Naive thymus-derived CD4-positive, alpha-beta T cell (primary cell): ENCODE measurements at regions of chr5 and their contacts with region 1.

Region 1: GRCh38 chr5:139422307-139422893 is 16.9 kb downstream of the DNAJC18 start:
- DNase-seq: peak in 7 of 9 donors; percentile 65 to 86 (median 75)
- ATAC-seq: peak; percentile 99
- H3K4me3 ChIP-seq: no peak overlapping the region
- H3K4me3 Mint-ChIP-seq: peak overlapping the region in 2 of 10 donors; percentile 19 to 47
- H3K27ac ChIP-seq: no peak overlapping the region
- H3K27ac Mint-ChIP-seq: peak overlapping the region in 6 of 9 donors; percentile 16 to 87 (median 74)
- H3K4me1 ChIP-seq: peaks cover 3 to 4% of the 10 kb centered on the region in 2 donors
- H3K4me1 Mint-ChIP-seq: peaks cover 4 to 40% (median 6%) of the 10 kb centered on the region in 7 donors
- H3K27me3 ChIP-seq: no peaks in the 10 kb centered on the region
- H3K27me3 Mint-ChIP-seq: no peaks in the 10 kb centered on the region

Region 2: GRCh38 chr5:139287890-139288635 is 134.3 kb before region 1 on chr5:
- CTCF ChIA-PET with region 1: interaction called, 6 read pairs
- POLR2A ChIA-PET with region 1: no interaction called
- intact Hi-C with region 1: loop called in 1 of 2 experiments (anchors 1 kb)
- DNase-seq: peak in 4 of 9 donors; percentile 21 to 38 (median 34)
- ATAC-seq: peak; percentile 57
- H3K4me3 ChIP-seq: no peak overlapping the region
- H3K4me3 Mint-ChIP-seq: no peak overlapping the region
- H3K27ac ChIP-seq: no peak overlapping the region
- H3K27ac Mint-ChIP-seq: peak overlapping the region in 2 of 9 donors; percentile 0 to 7
- H3K4me1 ChIP-seq: peaks cover 0 to 3% of the 10 kb centered on the region in 2 donors
- H3K4me1 Mint-ChIP-seq: peaks cover 0 to 20% (median 5%) of the 10 kb centered on the region in 7 donors
- H3K27me3 ChIP-seq: no peaks in the 10 kb centered on the region
- H3K27me3 Mint-ChIP-seq: no peaks in the 10 kb centered on the region

Region 3: DNA sequence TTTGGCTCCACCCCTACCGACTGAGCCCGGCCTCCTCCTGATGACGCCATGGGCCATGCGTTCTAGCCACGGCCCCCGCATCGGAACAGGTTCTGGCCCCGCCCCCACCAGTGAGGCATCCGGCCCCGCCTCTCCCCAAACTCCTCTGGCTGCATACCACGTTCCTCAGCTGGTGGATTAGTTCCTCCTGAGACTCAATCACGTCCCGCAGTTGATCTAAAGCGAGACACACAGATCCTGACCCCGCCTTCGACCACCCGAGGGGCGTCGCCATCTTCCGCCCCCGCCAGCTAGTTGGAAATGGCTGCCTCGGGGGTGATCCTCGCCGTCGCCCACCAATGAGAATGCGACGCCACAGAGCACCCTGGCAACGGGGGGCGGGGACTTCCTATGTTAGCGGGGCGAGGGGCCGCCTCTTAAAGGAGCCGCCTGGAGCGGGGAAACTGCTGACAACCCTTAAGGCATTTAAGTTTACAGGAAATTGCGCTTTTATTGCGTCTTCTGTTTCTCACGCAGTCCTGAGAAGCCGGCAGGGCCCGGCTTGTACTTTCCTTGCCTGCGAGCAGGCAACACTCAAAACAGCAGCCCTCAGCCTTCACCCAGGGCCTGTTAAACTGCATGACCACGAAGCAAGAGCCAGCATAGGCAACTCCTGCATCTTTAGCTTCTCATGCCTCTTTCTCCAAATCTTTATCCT is 18.5 kb before region 1 on chr5 and contains the start of gene SPATA24:
- CTCF ChIA-PET with region 1: interaction called, 7 read pairs
- POLR2A ChIA-PET with region 1: interaction called, 9 read pairs
- intact Hi-C with region 1: loop called in 1 of 2 experiments (anchors 1 kb)
- DNase-seq: peak; percentile 90 to 99 (median 98)
- ATAC-seq: peak; percentile 94
- H3K4me3 ChIP-seq: peak within 1 kb of the TSS; percentile 56
- H3K4me3 Mint-ChIP-seq: peak within 1 kb of the TSS; percentile 88 to 98 (median 94)
- H3K27ac ChIP-seq: peak within 1 kb of the TSS; percentile 88
- H3K27ac Mint-ChIP-seq: peak within 1 kb of the TSS; percentile 96 to 100 (median 99)
- H3K4me1 ChIP-seq: peaks cover 16 to 18% of the 10 kb centered on the region in 2 donors
- H3K4me1 Mint-ChIP-seq: peaks cover 26 to 42% (median 36%) of the 10 kb centered on the region in 7 donors
- H3K27me3 ChIP-seq: no peaks in the 10 kb centered on the region
- H3K27me3 Mint-ChIP-seq: no peaks in the 10 kb centered on the region
- total RNA-seq, gene SPATA24: 4.4 to 7.6 (median 5.8) TPM

Region 4: DNA sequence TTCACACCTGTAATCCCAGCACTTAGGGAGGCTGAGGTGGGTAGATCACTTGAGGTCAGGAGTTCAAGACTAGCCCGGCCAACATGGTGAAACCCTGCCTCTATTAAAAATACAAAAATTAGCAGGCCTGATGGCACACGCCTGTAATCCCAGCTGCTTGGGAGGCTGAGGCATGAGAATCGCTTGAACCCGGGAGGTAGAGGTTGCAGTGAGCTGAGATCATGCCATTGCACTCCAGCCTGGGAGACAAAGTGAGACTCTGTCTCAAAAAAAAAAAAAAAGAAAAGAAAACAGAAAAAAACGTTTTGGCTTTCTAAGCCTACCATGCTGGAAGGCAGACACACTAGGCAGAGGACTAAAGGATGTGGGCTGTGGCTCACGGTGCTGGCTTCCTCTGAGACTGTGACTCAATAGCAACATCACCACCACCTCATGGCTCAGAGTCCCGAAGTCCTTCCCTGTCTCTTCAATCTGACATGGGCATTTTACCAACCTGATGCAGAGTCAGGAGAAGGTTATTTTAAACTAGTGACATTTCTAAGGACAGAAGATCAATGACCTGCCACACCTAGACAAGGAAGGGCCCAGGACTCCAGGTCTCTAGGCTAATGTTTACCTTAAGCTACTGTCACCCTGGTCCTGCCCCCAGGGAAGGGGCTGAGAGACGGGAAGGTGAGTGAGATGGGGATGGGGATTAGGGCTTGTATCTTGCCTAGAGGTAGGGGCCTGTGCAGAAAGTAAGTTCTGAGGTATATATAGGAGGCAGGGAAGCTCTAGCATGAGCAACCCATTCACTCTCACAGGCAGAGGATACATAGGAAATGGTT is 36.4 kb after region 1 on chr5:
- CTCF ChIA-PET with region 1: interaction called, 16 read pairs
- POLR2A ChIA-PET with region 1: interaction called, 7 read pairs
- intact Hi-C with region 1: loop called in 1 of 2 experiments (anchors 1 kb)
- DNase-seq: peak in 8 of 9 donors; percentile 71 to 89 (median 85)
- ATAC-seq: peak; percentile 98
- H3K4me3 ChIP-seq: peak overlapping the region; percentile 10
- H3K4me3 Mint-ChIP-seq: peak overlapping the region; percentile 38 to 86 (median 64)
- H3K27ac ChIP-seq: peak overlapping the region; percentile 73
- H3K27ac Mint-ChIP-seq: peak overlapping the region; percentile 89 to 98 (median 94)
- H3K4me1 ChIP-seq: peaks cover 35 to 49% of the 10 kb centered on the region in 2 donors
- H3K4me1 Mint-ChIP-seq: peaks cover 33 to 72% (median 64%) of the 10 kb centered on the region in 7 donors
- H3K27me3 ChIP-seq: no peaks in the 10 kb centered on the region
- H3K27me3 Mint-ChIP-seq: no peaks in the 10 kb centered on the region

Region 5: DNA sequence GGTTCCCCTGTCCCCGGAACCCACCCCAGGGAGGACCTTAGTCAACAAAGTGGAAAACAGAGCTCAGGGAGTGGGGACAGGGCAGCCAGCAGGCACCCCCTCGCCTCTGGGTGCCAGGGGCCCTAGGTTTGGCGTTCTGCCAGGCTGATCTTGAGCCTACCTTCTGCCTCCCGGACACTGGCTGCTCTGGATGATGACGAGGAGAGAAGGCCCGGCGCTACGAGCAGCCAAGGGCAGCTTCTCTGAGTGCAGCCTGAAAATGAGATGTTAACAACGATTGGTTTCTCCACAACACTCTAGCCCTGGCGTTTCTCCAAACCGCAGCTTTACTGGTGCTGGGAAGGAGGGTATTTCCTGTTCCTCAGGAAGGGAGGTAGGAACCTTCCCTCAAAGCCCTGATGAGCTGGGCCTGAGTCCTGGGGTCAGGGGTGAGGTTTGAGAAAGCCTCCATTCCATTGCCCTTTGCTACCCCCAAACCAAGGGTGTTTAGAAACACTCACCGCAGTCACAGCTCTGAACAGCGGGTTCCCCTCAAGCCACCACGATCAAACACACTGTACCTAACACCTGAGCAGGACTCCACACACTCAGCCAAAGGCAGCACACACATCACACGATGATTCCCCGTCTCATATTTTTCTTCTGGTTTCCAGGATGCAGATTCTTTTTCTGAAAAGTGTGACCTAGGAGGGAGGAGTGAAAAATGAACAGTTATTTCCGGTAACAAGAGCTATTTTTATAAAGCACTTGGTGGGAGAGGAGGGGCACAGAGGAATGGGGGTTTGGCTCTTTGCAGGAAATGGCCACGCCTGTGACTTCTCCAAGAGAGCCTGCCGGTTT is 59.9 kb after region 1 on chr5 and contains the start of gene STING1:
- CTCF ChIA-PET with region 1: interaction called, 17 read pairs
- POLR2A ChIA-PET with region 1: interaction called, 6 read pairs
- intact Hi-C with region 1: loop called (anchors 1 kb)
- DNase-seq: peak; percentile 29 to 83 (median 71)
- ATAC-seq: peak; percentile 86
- H3K4me3 ChIP-seq: peak within 1 kb of the TSS; percentile 87
- H3K4me3 Mint-ChIP-seq: peak within 1 kb of the TSS; percentile 86 to 99 (median 94)
- H3K27ac ChIP-seq: peak within 1 kb of the TSS; percentile 80
- H3K27ac Mint-ChIP-seq: peak within 1 kb of the TSS; percentile 94 to 99 (median 96)
- H3K4me1 ChIP-seq: peaks cover 21 to 29% of the 10 kb centered on the region in 2 donors
- H3K4me1 Mint-ChIP-seq: peaks cover 26 to 45% (median 39%) of the 10 kb centered on the region in 7 donors
- H3K27me3 ChIP-seq: no peaks in the 10 kb centered on the region
- H3K27me3 Mint-ChIP-seq: no peaks in the 10 kb centered on the region
- total RNA-seq, gene STING1: 124 to 213 (median 130) TPM

Region 6: DNA sequence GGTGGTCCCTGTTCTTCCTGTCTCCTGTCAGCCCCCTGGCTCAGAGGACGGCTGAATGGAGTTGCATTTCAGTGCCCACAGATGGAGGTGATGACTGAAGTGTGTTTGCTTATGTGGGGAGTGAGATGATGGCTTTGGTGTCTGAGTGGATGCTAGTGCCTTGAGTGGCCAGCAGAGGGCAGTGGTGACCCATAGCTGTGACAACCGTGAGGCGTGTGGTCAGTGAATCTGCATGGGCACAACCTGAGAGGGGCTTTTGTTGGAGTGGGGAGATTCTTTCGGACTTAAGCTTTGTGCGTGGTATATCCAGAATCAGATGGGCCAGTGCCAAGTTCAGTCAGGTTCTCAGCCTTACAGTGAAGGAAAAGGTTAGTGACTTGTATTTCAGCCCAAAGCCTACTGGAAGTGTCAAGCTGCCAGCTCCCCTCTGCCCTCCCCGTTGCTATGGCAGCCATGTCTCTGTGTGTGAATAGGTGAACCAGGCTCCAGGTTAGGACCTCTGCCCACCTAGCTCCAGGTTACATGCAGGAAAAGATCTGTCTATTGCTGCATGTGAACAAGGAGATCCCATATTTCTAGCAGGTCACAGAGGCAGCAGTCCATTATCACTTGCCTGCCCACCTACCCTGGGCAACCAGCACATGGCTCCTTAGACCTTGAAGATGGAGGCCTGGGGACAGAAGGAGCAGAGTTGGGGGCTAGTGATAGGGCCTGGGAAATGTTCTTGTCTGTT is 211.1 kb after region 1 on chr5:
- CTCF ChIA-PET with region 1: interaction called, 3 read pairs
- POLR2A ChIA-PET with region 1: no interaction called
- intact Hi-C with region 1: loop called (anchors 2 to 5 kb)
- DNase-seq: peak; percentile 49 to 68 (median 62)
- ATAC-seq: peak; percentile 66
- H3K4me3 ChIP-seq: no peak overlapping the region
- H3K4me3 Mint-ChIP-seq: no peak overlapping the region
- H3K27ac ChIP-seq: no peak overlapping the region
- H3K27ac Mint-ChIP-seq: peak overlapping the region in 6 of 9 donors; percentile 3 to 41 (median 22)
- H3K4me1 ChIP-seq: peaks cover 27 to 28% of the 10 kb centered on the region in 2 donors
- H3K4me1 Mint-ChIP-seq: peaks cover 22 to 40% (median 39%) of the 10 kb centered on the region in 7 donors
- H3K27me3 ChIP-seq: no peaks in the 10 kb centered on the region
- H3K27me3 Mint-ChIP-seq: peaks cover 0 to 5% (median 0%) of the 10 kb centered on the region in 5 donors

Region 7: GRCh38 chr5:139765409-139766217 is 343.2 kb after region 1 on chr5:
- CTCF ChIA-PET with region 1: interaction called, 5 read pairs
- POLR2A ChIA-PET with region 1: no interaction called
- intact Hi-C with region 1: loop called (anchors 1 to 2 kb)
- DNase-seq: peak; percentile 62 to 93 (median 85)
- ATAC-seq: peak; percentile 95
- H3K4me3 ChIP-seq: peak overlapping the region; percentile 62
- H3K4me3 Mint-ChIP-seq: peak overlapping the region; percentile 37 to 84 (median 66)
- H3K27ac ChIP-seq: no peak overlapping the region
- H3K27ac Mint-ChIP-seq: peak overlapping the region in 2 of 9 donors; percentile 48 to 49
- H3K4me1 ChIP-seq: peaks cover 4 to 8% of the 10 kb centered on the region in 2 donors
- H3K4me1 Mint-ChIP-seq: peaks cover 0 to 12% (median 5%) of the 10 kb centered on the region in 7 donors
- H3K27me3 ChIP-seq: peaks cover 3 to 8% of the 10 kb centered on the region in 2 donors
- H3K27me3 Mint-ChIP-seq: peaks cover 22 to 53% (median 28%) of the 10 kb centered on the region in 5 donors